ENCODE measurements at regions of chr14 and their contacts with region 1.

Region 1: DNA sequence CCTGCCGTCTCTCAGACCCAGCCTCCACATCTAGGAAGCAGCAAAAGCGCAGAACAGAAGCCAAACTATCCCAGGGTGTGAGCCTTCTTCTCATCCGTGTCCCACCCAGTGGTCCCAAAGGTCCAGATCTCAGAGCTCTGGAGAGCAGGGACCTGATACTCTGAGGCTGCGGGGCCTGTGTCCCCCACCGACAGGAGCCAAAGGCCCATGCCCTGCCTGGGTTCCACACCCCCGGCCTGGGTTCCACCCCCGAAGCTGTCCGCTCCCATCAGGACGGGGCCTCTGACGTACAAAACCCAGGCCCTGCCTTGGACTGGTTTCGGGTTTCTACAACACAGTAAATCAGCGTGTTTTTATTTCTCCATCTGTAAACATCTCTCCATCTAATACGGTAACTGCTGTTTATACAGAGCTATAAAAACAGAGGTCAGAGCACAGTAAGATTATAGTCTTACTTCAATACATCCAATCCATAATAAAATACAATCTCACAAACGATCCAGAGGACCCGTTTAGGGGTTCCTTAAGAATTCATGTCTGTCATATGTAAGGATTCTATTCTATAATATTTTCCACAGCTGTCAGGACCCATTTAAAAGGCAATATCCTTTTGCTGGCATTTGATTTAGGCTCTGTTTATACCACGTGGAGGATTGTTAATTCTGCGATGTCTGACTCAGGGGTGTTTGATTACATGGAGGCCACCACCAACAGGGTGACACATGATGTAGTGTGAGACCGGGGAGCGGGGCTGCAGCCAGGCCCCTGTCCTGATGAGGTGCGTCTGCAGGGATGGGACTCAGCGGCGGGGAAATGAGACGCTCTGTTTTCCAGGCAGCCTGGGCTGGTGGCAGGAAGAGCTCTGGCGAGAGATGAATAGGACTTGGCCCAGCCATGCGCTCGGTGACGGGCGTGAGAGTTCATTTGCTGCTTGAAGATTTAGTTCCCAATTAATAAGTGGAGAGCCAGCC is 110.3 kb downstream of the DICER1 start:
- DNase-seq: peak; percentile 90
- H3K4me3 ChIP-seq: no peak overlapping the region
- H3K27ac ChIP-seq: peak overlapping the region in 3 of 4 donors; percentile 68 to 77 (median 71)
- H3K4me1 ChIP-seq: peaks cover 0 to 23% (median 21%) of the 10 kb centered on the region in 4 donors
- H3K27me3 ChIP-seq: no peaks in the 10 kb centered on the region
- CTCF ChIP-seq: no peak
- EP300 ChIP-seq: peak; percentile 37 to 90 (median 66)
- POLR2A ChIP-seq: no peak

Region 2: GRCh38 chr14:94269156-94269555 is 777.8 kb before region 1 on chr14:
- intact Hi-C with region 1: no loop called
- DNase-seq: no peak
- H3K4me3 ChIP-seq: no peak overlapping the region
- H3K27ac ChIP-seq: no peak overlapping the region
- H3K4me1 ChIP-seq: no peaks in the 10 kb centered on the region
- H3K27me3 ChIP-seq: no peaks in the 10 kb centered on the region
- CTCF ChIP-seq: no peak
- EP300 ChIP-seq: no peak
- POLR2A ChIP-seq: no peak

Region 3: GRCh38 chr14:94971750-94972149 is 75.2 kb before region 1 on chr14:
- intact Hi-C with region 1: loop called (anchors 2 kb)
- DNase-seq: peak; percentile 91
- H3K4me3 ChIP-seq: peak overlapping the region in 3 of 4 donors; percentile 12 to 25 (median 14)
- H3K27ac ChIP-seq: peak overlapping the region; percentile 64 to 83 (median 78)
- H3K4me1 ChIP-seq: peaks cover 0 to 15% (median 10%) of the 10 kb centered on the region in 4 donors
- H3K27me3 ChIP-seq: no peaks in the 10 kb centered on the region
- CTCF ChIP-seq: no peak
- EP300 ChIP-seq: peak in 3 of 4 donors; percentile 51 to 83 (median 61)
- POLR2A ChIP-seq: no peak

Region 4: GRCh38 chr14:95068080-95068479 is 21.1 kb after region 1 on chr14:
- intact Hi-C with region 1: no loop called
- DNase-seq: peak; percentile 29
- H3K4me3 ChIP-seq: no peak overlapping the region
- H3K27ac ChIP-seq: no peak overlapping the region
- H3K4me1 ChIP-seq: peaks cover 0 to 8% (median 2%) of the 10 kb centered on the region in 4 donors
- H3K27me3 ChIP-seq: no peaks in the 10 kb centered on the region
- CTCF ChIP-seq: no peak
- EP300 ChIP-seq: no peak
- POLR2A ChIP-seq: no peak